ENCODE measurements at regions of chr22 and their contacts with region 1.

Region 1: DNA sequence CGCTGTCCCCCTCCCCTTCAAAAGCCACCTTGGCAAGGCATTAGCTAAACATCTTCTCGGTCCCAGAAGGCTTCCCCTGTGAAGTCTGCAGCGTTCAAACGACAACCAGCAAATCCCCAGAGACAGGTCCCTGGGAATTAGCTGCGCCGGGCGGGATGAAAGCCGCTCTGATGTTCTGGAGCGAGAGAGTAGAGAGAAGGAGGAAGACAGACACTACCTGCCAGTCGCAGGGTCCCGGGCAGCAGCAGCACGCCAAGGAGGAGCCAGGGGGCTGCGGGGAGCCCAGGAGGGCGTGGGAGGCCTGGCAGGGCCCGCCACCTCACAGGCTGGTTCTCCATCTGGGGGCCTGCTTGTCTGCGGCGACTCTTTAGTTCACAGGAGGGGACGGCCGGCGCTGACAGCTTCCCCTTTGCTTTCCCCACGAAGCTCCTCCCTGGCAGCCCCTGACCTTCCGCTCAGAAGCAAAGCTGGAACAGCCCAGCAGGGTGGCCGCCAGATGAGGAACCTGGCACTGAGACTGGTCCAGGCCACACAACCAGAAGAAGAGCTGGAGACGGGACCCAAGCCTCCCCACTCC is at the start of gene NFAM1:
- DNase-seq: no peak
- H3K4me3 ChIP-seq: no peak within 1 kb of the TSS
- H3K27ac ChIP-seq: no peak within 1 kb of the TSS
- H3K4me1 ChIP-seq: peaks cover 21% of the 10 kb centered on the region
- H3K27me3 ChIP-seq: no peaks in the 10 kb centered on the region
- CTCF ChIP-seq: no peak
- total RNA-seq, gene NFAM1: 0.17 TPM in 1 of 2 donors, not detected in the other

Region 2: GRCh38 chr22:42169055-42169469 is 263.0 kb before region 1 on chr22:
- CTCF ChIA-PET with region 1: no interaction called
- dilution Hi-C with region 1: no loop called
- in situ Hi-C with region 1: loop called in 1 of 2 experiments (anchors 5 kb)
- intact Hi-C with region 1: loop called (anchors 1 kb)
- DNase-seq: peak; percentile 17
- H3K4me3 ChIP-seq: no peak overlapping the region
- H3K27ac ChIP-seq: no peak overlapping the region
- H3K4me1 ChIP-seq: peaks cover 20% of the 10 kb centered on the region
- H3K27me3 ChIP-seq: no peaks in the 10 kb centered on the region
- CTCF ChIP-seq: peak; percentile 70 to 77

Region 3: GRCh38 chr22:42376711-42377554 is 55.2 kb before region 1 on chr22:
- CTCF ChIA-PET with region 1: no interaction called
- dilution Hi-C with region 1: loop called (anchors 5 kb)
- in situ Hi-C with region 1: no loop called
- intact Hi-C with region 1: loop called (anchors 1 kb)
- DNase-seq: no peak
- H3K4me3 ChIP-seq: no peak overlapping the region
- H3K27ac ChIP-seq: no peak overlapping the region
- H3K4me1 ChIP-seq: no peaks in the 10 kb centered on the region
- H3K27me3 ChIP-seq: no peaks in the 10 kb centered on the region
- CTCF ChIP-seq: no peak